ENCODE measurements at regions of chr6 and their contacts with region 1.

Region 1: DNA sequence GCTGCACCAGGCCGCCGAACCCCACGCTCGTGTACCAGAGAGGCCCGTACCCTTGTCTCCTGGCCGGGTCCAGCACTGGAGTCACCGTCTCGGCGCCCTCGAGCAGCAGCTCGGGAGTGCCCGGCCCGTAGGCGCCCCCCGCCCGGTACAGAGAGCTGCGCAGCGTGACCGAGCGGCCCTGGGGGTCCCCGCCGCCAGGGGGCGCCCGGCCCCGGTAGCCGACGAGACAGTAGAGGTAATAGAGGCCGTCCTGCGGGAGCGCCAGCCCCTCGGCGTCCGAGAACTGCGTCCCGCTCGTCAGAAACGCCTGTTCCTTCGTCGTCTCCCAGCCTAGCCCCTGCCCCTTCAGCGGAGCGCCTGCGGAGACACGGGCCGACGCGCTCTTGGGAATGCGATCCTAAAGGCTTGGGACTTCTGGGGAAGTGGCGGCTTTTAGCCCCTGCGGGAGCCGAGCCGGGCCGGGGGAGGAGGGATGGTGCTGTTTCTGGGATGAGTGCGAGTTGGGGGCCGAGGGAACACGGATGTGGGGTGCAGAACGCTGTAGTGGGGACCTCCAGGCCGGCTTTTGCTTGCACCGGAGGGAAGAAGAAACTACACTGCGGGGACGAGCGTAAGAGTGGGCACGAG is 1.3 kb downstream of the LTB start:
- DNase-seq: peak; percentile 83 to 89 (median 85)
- H3K4me3 ChIP-seq: peak overlapping the region; percentile 89 to 95
- H3K4me3 Mint-ChIP-seq: peak overlapping the region; percentile 95 to 100 (median 99)
- H3K27ac ChIP-seq: peak overlapping the region; percentile 92
- H3K27ac Mint-ChIP-seq: peak overlapping the region; percentile 96 to 100 (median 99)
- H3K4me1 ChIP-seq: peaks cover 71% of the 10 kb centered on the region
- H3K4me1 Mint-ChIP-seq: peaks cover 32 to 95% (median 53%) of the 10 kb centered on the region in 4 donors
- H3K27me3 ChIP-seq: no peaks in the 10 kb centered on the region
- H3K27me3 Mint-ChIP-seq: no peaks in the 10 kb centered on the region

Region 2: DNA sequence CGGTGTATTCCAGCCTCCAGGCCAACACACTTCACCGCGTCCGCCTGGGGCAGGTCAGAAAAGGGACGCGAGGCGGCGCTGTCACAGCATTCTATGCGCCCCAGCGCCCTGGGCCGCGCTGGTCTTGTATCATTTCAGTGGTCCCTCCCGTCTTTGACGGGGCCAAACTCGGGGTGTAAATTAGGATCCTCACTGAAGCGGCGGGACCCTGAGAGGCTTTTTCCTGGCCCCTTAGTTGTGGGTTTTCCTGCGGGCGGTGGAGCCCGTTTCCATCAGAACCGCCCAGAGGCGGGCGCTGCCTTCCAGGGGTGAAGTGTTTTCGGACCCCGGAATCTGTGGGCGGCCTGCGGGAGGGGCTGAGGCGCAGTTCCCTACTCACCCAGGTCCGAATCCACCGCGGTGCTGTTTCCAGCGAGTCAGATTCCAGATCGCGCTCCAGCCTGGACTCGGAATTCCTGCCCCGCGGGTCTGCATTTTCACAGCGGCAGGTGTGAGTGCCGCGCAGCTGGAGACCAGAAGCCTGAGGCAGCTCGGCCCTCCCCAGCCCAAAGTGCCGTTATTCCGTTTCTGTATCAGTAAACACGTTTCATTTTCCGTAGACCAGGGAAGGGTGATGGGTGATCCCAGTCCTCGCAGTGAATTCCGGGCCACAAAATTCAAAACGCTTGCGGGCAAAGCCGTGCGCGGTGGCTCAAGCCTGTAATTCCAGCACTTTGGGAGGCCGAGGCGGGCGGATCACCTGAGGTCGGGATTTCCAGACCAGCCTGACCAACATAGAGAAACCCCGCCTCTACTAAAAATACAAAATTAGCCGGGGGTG is 86.8 kb before region 1 on chr6:
- CTCF ChIA-PET with region 1: interaction called, 17 read pairs
- POLR2A ChIA-PET with region 1: interaction called, 43 read pairs
- intact Hi-C with region 1: loop called (anchors 5 kb)
- DNase-seq: peak; percentile 56 to 76 (median 73)
- H3K4me3 ChIP-seq: peak overlapping the region; percentile 71 to 91
- H3K4me3 Mint-ChIP-seq: peak overlapping the region; percentile 85 to 98 (median 91)
- H3K27ac ChIP-seq: peak overlapping the region; percentile 77
- H3K27ac Mint-ChIP-seq: peak overlapping the region; percentile 87 to 96 (median 95)
- H3K4me1 ChIP-seq: peaks cover 63% of the 10 kb centered on the region
- H3K4me1 Mint-ChIP-seq: peaks cover 35 to 69% (median 50%) of the 10 kb centered on the region in 4 donors
- H3K27me3 ChIP-seq: no peaks in the 10 kb centered on the region
- H3K27me3 Mint-ChIP-seq: no peaks in the 10 kb centered on the region

Region 3: GRCh38 chr6:31559958-31560696 is 20.8 kb before region 1 on chr6:
- CTCF ChIA-PET with region 1: interaction called, 595 read pairs
- POLR2A ChIA-PET with region 1: interaction called, 3,597 read pairs
- intact Hi-C with region 1: loop called (anchors 1 kb)
- DNase-seq: peak in 3 of 5 donors; percentile 35 to 76 (median 38)
- H3K4me3 ChIP-seq: peak overlapping the region in 1 of 2 donors; percentile 53
- H3K4me3 Mint-ChIP-seq: peak overlapping the region; percentile 78 to 90 (median 84)
- H3K27ac ChIP-seq: peak overlapping the region; percentile 58
- H3K27ac Mint-ChIP-seq: peak overlapping the region; percentile 91 to 99 (median 95)
- H3K4me1 ChIP-seq: peaks cover 87% of the 10 kb centered on the region
- H3K4me1 Mint-ChIP-seq: peaks cover 53 to 87% (median 65%) of the 10 kb centered on the region in 4 donors
- H3K27me3 ChIP-seq: no peaks in the 10 kb centered on the region
- H3K27me3 Mint-ChIP-seq: no peaks in the 10 kb centered on the region

Region 4: DNA sequence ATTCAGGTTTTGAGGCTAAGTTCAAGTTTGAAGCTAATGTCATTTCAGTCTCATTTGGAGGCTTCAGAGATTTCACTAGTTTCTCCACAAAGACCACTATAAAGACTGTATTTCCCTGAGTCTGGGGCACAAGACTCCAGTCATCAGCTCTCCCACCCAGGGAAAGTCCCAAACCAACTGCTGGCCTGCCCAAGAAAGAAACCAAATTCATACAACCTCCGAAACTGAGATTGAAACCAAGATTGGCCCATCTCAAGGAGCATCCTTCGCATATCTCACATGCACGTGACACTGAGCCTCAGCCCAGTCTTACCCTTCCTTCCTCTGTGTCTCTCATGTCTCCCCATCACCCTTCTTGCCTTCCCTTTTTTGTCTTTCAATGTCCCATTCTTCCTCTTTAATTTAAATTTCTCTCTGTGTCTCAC is 12.4 kb before region 1 on chr6:
- CTCF ChIA-PET with region 1: interaction called, 962 read pairs
- POLR2A ChIA-PET with region 1: interaction called, 3,597 read pairs
- intact Hi-C with region 1: loop called (anchors 1 kb)
- DNase-seq: peak; percentile 81 to 93 (median 83)
- H3K4me3 ChIP-seq: no peak overlapping the region
- H3K4me3 Mint-ChIP-seq: peak overlapping the region; percentile 7 to 83 (median 72)
- H3K27ac ChIP-seq: peak overlapping the region; percentile 79
- H3K27ac Mint-ChIP-seq: peak overlapping the region; percentile 95 to 99 (median 98)
- H3K4me1 ChIP-seq: peaks cover 90% of the 10 kb centered on the region
- H3K4me1 Mint-ChIP-seq: peaks cover 58 to 87% (median 72%) of the 10 kb centered on the region in 4 donors
- H3K27me3 ChIP-seq: no peaks in the 10 kb centered on the region
- H3K27me3 Mint-ChIP-seq: no peaks in the 10 kb centered on the region

Region 5: DNA sequence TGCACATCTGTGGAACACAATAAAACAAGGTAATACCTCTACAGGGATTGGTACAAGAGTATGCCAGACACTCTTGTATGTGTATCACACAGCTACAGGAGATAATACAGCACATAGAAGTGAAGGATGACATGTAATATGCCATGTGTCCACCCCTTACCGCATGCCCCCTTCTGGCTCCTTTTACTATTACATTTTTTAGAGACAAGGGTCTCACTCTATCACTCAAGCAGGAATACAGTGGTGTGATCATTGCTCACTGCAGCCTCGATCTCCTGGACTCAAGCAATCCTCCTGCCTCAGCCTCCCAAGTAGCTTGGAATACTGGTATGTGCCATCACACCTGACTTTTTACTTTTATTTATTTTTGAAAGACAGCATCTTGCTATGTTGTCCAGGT is 16.1 kb after region 1 on chr6:
- CTCF ChIA-PET with region 1: interaction called, 962 read pairs
- POLR2A ChIA-PET with region 1: interaction called, 3,597 read pairs
- intact Hi-C with region 1: loop called (anchors 1 kb)
- DNase-seq: peak; percentile 66 to 79 (median 75)
- H3K4me3 ChIP-seq: no peak overlapping the region
- H3K4me3 Mint-ChIP-seq: peak overlapping the region in 5 of 8 donors; percentile 33 to 66 (median 43)
- H3K27ac ChIP-seq: no peak overlapping the region
- H3K27ac Mint-ChIP-seq: peak overlapping the region; percentile 60 to 89 (median 77)
- H3K4me1 ChIP-seq: peaks cover 60% of the 10 kb centered on the region
- H3K4me1 Mint-ChIP-seq: peaks cover 27 to 56% (median 45%) of the 10 kb centered on the region in 4 donors
- H3K27me3 ChIP-seq: no peaks in the 10 kb centered on the region
- H3K27me3 Mint-ChIP-seq: no peaks in the 10 kb centered on the region

Region 6: DNA sequence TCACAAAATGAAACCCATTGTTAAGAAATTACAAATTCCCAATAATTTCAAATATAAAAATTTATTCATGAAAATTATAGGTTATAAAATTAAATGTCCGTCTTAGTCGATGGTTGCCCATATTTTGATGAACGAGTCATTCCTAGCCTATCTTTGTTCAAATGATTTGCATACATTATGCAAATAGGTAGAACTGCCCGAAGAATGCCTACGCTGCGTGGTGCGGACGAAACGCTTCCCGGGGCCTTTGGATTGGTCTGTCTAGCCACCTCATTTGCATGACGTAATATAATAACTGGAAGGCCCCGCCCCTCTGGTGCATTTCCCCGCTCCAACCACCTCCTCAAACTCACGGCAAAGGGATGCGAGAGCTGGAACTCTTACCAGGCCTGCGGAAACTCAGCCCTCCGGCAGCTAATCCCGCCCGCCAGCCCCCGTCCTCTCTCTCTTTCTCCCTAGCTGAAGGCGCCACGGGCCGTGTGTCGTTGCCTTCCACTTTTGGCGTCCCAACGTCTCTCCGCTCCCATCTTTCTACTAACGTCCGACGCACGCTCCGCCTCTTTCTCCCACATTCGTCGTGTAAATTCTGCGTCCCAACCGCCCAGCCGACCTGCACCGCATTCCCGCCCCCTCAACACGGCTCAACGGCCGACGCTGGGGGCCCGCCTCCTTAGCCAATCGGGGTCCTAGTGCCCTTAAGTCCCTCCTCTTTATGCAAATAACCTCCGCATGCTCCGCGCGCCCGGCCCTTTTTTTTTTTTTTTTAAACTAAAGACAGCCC is 39.1 kb after region 1 on chr6:
- CTCF ChIA-PET with region 1: no interaction called
- POLR2A ChIA-PET with region 1: interaction called, 11 read pairs
- intact Hi-C with region 1: no loop called
- DNase-seq: peak; percentile 96 to 98 (median 98)
- H3K4me3 ChIP-seq: peak overlapping the region in 1 of 2 donors; percentile 93
- H3K4me3 Mint-ChIP-seq: peak overlapping the region; percentile 89 to 98 (median 93)
- H3K27ac ChIP-seq: peak overlapping the region; percentile 99
- H3K27ac Mint-ChIP-seq: peak overlapping the region; percentile 91 to 99 (median 98)
- H3K4me1 ChIP-seq: peaks cover 34% of the 10 kb centered on the region
- H3K4me1 Mint-ChIP-seq: peaks cover 21 to 49% (median 39%) of the 10 kb centered on the region in 4 donors
- H3K27me3 ChIP-seq: no peaks in the 10 kb centered on the region
- H3K27me3 Mint-ChIP-seq: no peaks in the 10 kb centered on the region

Region 7: GRCh38 chr6:31660381-31661261 is 79.7 kb after region 1 on chr6 and contains the start of gene C6orf47:
- CTCF ChIA-PET with region 1: no interaction called
- POLR2A ChIA-PET with region 1: interaction called, 10 read pairs
- intact Hi-C with region 1: no loop called
- DNase-seq: peak; percentile 64 to 76 (median 66)
- H3K4me3 ChIP-seq: peak within 1 kb of the TSS; percentile 71 to 83
- H3K4me3 Mint-ChIP-seq: peak within 1 kb of the TSS; percentile 86 to 93 (median 92)
- H3K27ac ChIP-seq: peak within 1 kb of the TSS; percentile 84
- H3K27ac Mint-ChIP-seq: peak within 1 kb of the TSS; percentile 88 to 95 (median 91)
- H3K4me1 ChIP-seq: peaks cover 61% of the 10 kb centered on the region
- H3K4me1 Mint-ChIP-seq: peaks cover 48 to 87% (median 66%) of the 10 kb centered on the region in 4 donors
- H3K27me3 ChIP-seq: no peaks in the 10 kb centered on the region
- H3K27me3 Mint-ChIP-seq: no peaks in the 10 kb centered on the region
- total RNA-seq, gene C6orf47: 37.5 to 39.9 TPM

Region 8: GRCh38 chr6:31680840-31681671 is 100.1 kb after region 1 on chr6 and contains the start of gene LY6G5C:
- CTCF ChIA-PET with region 1: no interaction called
- POLR2A ChIA-PET with region 1: no interaction called
- intact Hi-C with region 1: no loop called
- DNase-seq: peak in 4 of 5 donors; percentile 51 to 59 (median 56)
- H3K4me3 ChIP-seq: peak within 1 kb of the TSS; percentile 69 to 70
- H3K4me3 Mint-ChIP-seq: peak within 1 kb of the TSS; percentile 86 to 91 (median 90)
- H3K27ac ChIP-seq: peak within 1 kb of the TSS; percentile 51
- H3K27ac Mint-ChIP-seq: peak within 1 kb of the TSS; percentile 77 to 92 (median 86)
- H3K4me1 ChIP-seq: peaks cover 19% of the 10 kb centered on the region
- H3K4me1 Mint-ChIP-seq: peaks cover 11 to 27% (median 16%) of the 10 kb centered on the region in 4 donors
- H3K27me3 ChIP-seq: no peaks in the 10 kb centered on the region
- H3K27me3 Mint-ChIP-seq: no peaks in the 10 kb centered on the region
- total RNA-seq, gene LY6G5C: 4.4 to 4.5 TPM